ENCODE measurements at regions of chr13 and their contacts with region 1.

Region 1: DNA sequence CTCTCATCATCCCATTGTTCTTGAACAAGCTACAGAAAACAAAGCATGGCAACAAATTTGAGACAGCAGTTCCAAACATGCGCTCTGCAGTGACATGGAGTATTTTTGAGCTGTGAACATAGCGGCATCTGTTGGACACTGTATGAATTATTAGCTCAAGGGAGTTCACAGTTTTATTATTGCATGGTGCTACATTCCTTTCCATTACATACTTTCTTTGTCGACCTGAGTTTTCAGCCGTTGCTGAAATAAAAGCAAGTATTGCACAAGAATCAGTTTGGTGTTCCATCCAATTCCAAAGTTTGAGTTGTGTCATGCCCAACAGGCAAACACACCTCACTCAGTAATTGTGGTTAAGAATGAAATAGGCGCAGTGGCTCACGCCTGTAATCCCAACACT is 30.1 kb upstream of the METTL21C start:
- DNase-seq: no peak
- ATAC-seq: peak; percentile 79
- H3K4me3 ChIP-seq: no peak overlapping the region
- H3K27ac ChIP-seq: no peak overlapping the region
- H3K4me1 ChIP-seq: peaks cover 0 to 2% of the 10 kb centered on the region in 2 donors
- H3K27me3 ChIP-seq: peaks cover 0 to 1% of the 10 kb centered on the region in 2 donors

Region 2: DNA sequence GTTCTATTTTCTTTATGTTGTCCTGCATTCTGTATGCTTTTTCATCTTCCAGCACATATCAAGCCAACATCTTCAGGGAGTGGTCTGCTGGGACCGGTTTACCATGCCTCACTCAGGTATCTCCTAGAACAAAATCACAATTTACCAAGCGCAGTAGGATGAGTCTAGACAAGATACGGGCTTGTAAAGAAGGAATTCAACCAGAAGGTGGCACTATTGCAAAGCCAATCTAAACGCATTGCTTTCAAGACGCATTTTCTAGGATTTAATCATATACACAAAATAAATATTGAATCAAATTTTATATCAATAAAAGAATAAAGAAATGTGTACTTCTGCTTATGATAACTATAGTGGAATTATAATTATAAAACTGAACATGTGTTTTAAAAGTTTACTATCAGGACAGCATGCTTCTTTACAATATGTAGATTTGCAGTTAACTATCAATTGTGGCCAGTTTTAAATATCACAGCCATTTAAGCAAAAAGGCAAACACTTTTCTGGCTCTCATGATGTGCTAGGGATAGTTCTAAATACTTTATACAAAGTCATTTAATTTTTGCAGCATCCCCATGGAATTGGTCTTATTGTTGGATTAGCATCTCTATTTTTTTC is 144.3 kb before region 1 on chr13:
- intact Hi-C with region 1: loop called (anchors 5 kb)
- DNase-seq: no peak
- ATAC-seq: peak; percentile 70
- H3K4me3 ChIP-seq: no peak overlapping the region
- H3K27ac ChIP-seq: no peak overlapping the region
- H3K4me1 ChIP-seq: no peaks in the 10 kb centered on the region
- H3K27me3 ChIP-seq: no peaks in the 10 kb centered on the region